ENCODE measurements at regions of chr20 and their contacts with region 1.

Region 1: DNA sequence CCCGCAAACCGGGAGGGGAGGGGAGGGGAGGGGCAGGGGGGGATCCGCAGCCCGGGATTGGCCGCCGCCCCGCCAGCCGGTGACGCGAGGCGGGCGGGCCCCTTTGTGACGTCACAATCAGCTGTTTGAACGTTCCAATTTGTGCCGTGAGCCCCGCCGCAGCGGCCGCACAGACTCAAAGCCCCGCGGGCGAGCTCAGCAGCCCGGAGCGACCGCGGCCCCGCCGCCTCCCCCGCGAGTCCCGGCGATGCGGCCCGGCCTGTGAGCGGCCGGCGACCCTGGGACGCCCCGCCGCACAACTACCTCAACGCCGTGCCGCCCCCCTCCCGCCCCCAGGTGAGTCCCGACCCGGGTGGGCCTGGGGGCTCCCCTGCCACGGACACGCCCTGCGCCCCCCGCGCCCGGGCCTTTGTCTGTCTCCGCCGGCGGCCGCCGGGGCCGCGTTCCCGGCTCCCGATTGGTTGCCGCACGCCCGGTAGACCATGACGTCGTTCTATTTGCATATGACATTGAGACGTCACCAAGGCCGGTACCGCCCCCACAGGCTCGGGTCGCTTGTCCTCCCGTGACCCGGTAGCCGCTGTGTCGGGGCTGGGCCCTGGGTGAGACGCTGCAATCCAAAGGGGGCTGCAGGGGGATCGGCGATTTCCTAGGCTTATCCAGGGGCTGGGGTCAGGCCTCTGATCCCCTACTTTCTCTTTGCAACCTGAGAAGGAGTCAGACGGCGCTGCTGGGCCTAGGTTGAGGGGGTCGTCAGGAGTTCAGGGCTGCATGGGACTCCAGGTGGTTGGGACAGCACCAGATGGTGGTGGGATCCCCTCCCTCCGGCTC is at the start of gene TP53INP2:
- DNase-seq: peak; percentile 98
- H3K4me3 ChIP-seq: peak within 1 kb of the TSS; percentile 88
- H3K27ac ChIP-seq: peak within 1 kb of the TSS; percentile 95
- H3K4me1 ChIP-seq: peaks cover 15% of the 10 kb centered on the region
- H3K27me3 ChIP-seq: no peaks in the 10 kb centered on the region
- total RNA-seq, gene TP53INP2: 2.4 and 3.9 TPM in 2 replicates

Region 2: DNA sequence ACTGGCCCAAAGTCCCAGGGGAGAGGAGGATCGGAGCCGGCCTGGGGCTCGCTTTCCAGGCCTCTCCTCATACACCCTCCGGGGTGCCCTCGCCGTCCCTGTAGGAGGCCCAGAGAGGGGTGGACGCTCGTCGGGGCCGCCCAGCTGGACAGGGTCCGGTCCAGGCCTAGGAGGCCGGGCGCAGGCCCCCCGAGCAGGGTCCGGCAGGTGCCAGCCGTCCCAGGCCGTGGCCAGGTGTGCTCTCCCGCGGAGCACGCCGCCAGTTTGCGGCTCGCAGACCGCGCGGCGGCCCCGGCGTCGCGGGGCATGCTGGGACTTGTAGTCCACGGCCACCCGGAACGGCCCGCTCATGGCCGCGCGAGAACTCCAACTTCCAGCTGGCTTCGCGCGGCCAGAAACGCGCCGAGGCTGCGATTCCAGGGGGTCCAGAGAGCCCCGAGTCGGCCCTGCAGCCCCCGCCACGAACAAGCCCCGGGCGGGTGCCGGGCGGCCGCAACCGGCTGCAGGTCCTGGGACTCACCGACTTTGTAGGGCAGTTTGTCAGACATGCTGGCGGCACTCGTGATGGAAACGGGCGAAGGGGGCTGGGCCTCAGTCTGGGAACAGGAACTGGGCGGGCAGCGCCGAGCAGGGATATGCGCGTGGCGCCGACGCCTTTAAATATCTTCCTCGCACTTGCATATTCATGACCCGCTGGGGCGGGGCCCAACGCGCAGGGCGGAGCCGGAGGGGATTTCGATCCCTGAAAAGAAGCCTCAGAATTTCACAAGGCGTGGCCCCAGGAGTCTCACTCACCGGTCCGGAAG is 401.5 kb before region 1 on chr20 and contains the start of gene AHCY:
- in situ Hi-C with region 1: loop called (anchors 25 kb)
- DNase-seq: peak; percentile 99
- H3K4me3 ChIP-seq: peak within 1 kb of the TSS; percentile 88
- H3K27ac ChIP-seq: peak within 1 kb of the TSS; percentile 95
- H3K4me1 ChIP-seq: peaks cover 12% of the 10 kb centered on the region
- H3K27me3 ChIP-seq: no peaks in the 10 kb centered on the region
- total RNA-seq, gene AHCY: 82.6 and 115 TPM in 2 replicates